Mammary epithelial cell (primary cell): ENCODE measurements at regions of chrX and their contacts with region 1.

Region 1: GRCh38 chrX:47297871-47298270 is 65.1 kb downstream of the USP11 start:
- DNase-seq: peak; percentile 84
- H3K4me3 ChIP-seq: no peak overlapping the region
- H3K27ac ChIP-seq: peak overlapping the region; percentile 62
- H3K4me1 ChIP-seq: no peaks in the 10 kb centered on the region
- H3K27me3 ChIP-seq: no peaks in the 10 kb centered on the region
- CTCF ChIP-seq: no peak

Region 2: GRCh38 chrX:47068214-47068613 is 229.7 kb before region 1 on chrX:
- CTCF ChIA-PET with region 1: no interaction called
- dilution Hi-C with region 1: no loop called
- in situ Hi-C with region 1: no loop called
- intact Hi-C with region 1: no loop called
- DNase-seq: no peak
- H3K4me3 ChIP-seq: no peak overlapping the region
- H3K27ac ChIP-seq: no peak overlapping the region
- H3K4me1 ChIP-seq: no peaks in the 10 kb centered on the region
- H3K27me3 ChIP-seq: peaks cover 2% of the 10 kb centered on the region
- CTCF ChIP-seq: no peak

Region 3: DNA sequence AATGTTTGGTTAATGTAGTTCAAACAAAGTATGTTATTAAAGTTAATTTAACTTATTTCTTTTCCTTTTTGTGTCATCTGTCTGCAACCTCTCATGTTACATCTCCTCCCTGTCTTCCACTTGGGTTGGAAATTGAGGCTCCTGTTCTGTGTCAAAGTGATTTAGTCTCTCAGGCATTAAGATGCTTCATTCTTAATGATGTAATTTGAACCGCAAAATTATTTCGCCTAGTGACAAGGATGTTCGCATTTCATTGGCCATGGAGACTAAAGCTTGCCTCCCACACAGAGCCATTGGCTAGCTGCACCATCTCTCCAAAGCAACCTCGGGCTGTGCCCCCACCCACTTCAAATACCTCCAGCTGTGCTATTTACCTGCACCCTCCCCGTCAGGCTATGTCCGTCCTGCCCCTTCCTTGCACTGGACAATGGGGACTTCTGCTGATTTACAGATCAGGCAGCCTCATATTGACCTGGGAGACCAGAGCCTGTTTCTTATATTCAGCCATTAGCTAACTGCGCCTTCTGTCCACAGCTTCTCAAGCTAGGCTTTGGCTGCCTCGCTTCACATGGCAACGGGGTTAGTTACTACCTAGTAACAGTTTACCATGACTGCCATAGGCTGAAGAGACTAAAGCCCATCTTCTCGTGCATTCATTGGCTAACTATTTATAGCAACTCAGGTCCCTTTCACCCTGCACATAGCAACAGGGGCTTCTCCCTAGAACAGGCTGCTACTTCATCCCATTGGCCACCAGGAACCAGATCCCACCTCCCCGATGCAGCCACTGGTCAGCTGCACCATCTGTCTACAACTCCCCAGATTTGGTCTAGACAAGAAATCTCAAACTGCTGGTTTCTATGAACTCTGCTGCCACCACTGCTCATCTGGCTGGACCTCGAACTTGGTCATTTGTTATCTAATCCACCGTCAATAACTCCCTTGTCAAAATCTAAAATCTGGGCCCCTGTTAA is 64.0 kb after region 1 on chrX:
- CTCF ChIA-PET with region 1: no interaction called
- dilution Hi-C with region 1: loop called (anchors 5 kb)
- in situ Hi-C with region 1: no loop called
- intact Hi-C with region 1: no loop called
- DNase-seq: peak; percentile 86
- H3K4me3 ChIP-seq: peak overlapping the region; percentile 11 to 44 (median 22)
- H3K27ac ChIP-seq: peak overlapping the region; percentile 65
- H3K4me1 ChIP-seq: no peaks in the 10 kb centered on the region
- H3K27me3 ChIP-seq: no peaks in the 10 kb centered on the region
- CTCF ChIP-seq: peak in 1 of 2 donors; percentile 11